CD8-positive, alpha-beta memory T cell (primary cell): ENCODE measurements at regions of chr12 and their contacts with region 1.

Region 1: GRCh38 chr12:8057839-8058238 is 8.3 kb downstream of the C3AR1 start:
- DNase-seq: no peak
- H3K4me3 ChIP-seq: no peak overlapping the region
- H3K4me3 Mint-ChIP-seq: no peak overlapping the region
- H3K27ac ChIP-seq: no peak overlapping the region
- H3K27ac Mint-ChIP-seq: peak overlapping the region in 5 of 8 donors; percentile 9 to 73 (median 57)
- H3K4me1 ChIP-seq: no peaks in the 10 kb centered on the region
- H3K4me1 Mint-ChIP-seq: peaks cover 0 to 4% (median 0%) of the 10 kb centered on the region in 3 donors
- H3K27me3 ChIP-seq: no peaks in the 10 kb centered on the region
- H3K27me3 Mint-ChIP-seq: no peaks in the 10 kb centered on the region

Region 2: DNA sequence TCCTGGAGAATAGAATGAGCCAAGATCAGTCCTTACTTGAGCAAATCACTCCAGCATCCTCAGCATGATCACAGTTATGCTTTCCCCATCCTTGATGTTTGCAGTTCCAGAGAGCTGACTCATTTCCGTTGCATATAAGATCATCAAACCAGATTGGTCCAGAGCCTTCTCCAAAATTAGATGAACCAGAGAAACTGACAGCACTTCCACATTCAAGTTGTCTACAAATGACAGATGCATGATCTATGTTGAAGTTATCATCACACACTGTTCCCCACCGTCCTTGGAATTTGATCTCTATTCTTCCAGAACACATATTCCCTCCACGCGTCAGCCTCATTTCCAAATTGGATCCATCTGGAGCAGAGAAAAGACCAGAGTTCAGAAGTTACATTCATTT is 559.0 kb before region 1 on chr12:
- CTCF ChIA-PET with region 1: no interaction called
- POLR2A ChIA-PET with region 1: no interaction called
- DNase-seq: no peak
- H3K4me3 ChIP-seq: no peak overlapping the region
- H3K4me3 Mint-ChIP-seq: no peak overlapping the region
- H3K27ac ChIP-seq: no peak overlapping the region
- H3K27ac Mint-ChIP-seq: no peak overlapping the region
- H3K4me1 ChIP-seq: no peaks in the 10 kb centered on the region
- H3K4me1 Mint-ChIP-seq: no peaks in the 10 kb centered on the region
- H3K27me3 ChIP-seq: no peaks in the 10 kb centered on the region
- H3K27me3 Mint-ChIP-seq: peaks cover 27 to 56% of the 10 kb centered on the region in 2 donors

Region 3: DNA sequence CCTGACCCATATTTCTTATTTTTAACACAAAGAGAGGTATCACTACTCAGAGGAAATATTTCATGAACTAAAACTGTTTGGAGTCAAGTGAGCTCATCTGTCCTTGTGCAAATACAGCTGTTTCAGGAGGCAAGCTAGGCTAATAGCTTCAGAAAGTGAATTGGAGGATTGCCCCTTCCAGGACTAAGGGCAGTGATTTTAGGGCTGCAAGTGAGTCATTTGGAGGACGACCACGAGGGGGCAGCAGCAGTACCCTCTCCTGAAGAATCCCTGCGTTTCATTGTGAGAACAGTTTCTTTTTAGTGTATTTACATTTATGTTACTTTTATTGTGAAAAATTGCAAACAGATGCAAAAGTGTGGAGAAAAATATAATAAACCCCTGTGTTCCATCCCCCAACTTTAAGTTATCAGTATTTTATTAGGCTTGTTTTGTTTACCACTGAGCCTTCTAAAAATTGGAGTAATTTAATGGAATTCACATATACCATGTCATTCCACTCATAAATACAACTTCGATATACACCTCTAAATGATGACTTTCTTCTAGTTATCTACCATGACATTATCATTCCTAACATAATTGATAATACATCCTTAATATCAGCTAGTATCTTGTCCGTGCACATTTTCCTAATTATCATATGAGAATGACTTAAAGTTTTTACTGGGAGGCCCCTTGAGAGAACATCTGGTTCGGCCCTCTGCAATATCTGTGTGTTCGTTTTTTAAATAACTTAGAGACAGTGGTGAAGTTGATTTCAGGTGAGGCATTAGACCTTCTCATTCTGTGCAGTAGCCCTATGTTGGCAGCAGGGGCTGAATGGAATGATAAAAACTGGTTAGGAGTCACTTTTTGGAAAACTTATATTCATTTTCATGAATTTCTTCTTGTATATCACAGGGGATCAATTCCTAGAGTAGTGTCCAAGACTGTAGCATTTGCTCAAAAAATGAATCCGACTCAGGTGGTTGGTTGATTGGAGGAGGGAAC is 11.6 kb before region 1 on chr12:
- CTCF ChIA-PET with region 1: interaction called, 12 read pairs
- POLR2A ChIA-PET with region 1: no interaction called
- DNase-seq: peak; percentile 68 to 84 (median 74)
- H3K4me3 ChIP-seq: no peak overlapping the region
- H3K4me3 Mint-ChIP-seq: no peak overlapping the region
- H3K27ac ChIP-seq: no peak overlapping the region
- H3K27ac Mint-ChIP-seq: peak overlapping the region in 7 of 8 donors; percentile 1 to 70 (median 44)
- H3K4me1 ChIP-seq: no peaks in the 10 kb centered on the region
- H3K4me1 Mint-ChIP-seq: peaks cover 7 to 11% (median 8%) of the 10 kb centered on the region in 3 donors
- H3K27me3 ChIP-seq: no peaks in the 10 kb centered on the region
- H3K27me3 Mint-ChIP-seq: no peaks in the 10 kb centered on the region